ENCODE measurements at regions of chr4 and their contacts with region 1.

Region 1: GRCh38 chr4:102620697-102621497 is 119.7 kb downstream of the NFKB1 start:
- DNase-seq: no peak
- ATAC-seq: peak; percentile 74 to 94 (median 90)
- H3K4me3 ChIP-seq: peak overlapping the region in 4 of 10 donors; percentile 23 to 38 (median 27)
- H3K27ac ChIP-seq: peak overlapping the region in 3 of 10 donors; percentile 9 to 60 (median 13)
- H3K4me1 ChIP-seq: peaks cover 0 to 20% (median 5%) of the 10 kb centered on the region in 9 donors
- H3K27me3 ChIP-seq: no peaks in the 10 kb centered on the region
- CTCF ChIP-seq: peak in 8 of 9 donors; percentile 29 to 71 (median 56)

Region 2: DNA sequence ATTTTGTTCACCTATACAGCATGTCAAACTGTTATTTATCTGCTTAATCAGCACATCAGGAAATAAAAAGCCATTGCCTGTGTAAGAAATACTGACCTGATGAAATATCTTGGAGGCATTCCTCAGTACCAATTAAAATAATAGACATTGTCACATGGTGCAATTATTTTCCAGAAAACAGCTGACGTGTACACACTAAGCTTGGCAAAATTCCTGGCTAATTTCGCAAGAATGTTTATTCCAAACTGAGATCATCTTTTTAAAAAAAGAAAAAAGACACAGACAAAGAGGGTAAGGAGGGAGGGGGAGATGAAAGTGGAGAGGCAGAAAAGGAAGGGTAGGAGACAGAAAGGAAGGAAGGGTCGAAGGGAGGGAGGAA is 181.7 kb before region 1 on chr4:
- intact Hi-C with region 1: loop called in 4 of 10 experiments (anchors 5 to 10 kb)
- DNase-seq: peak in 1 of 2 donors; percentile 46
- ATAC-seq: peak in 7 of 8 donors; percentile 75 to 88 (median 82)
- H3K4me3 ChIP-seq: no peak overlapping the region
- H3K27ac ChIP-seq: peak overlapping the region in 7 of 10 donors; percentile 16 to 73 (median 56)
- H3K4me1 ChIP-seq: peaks cover 0 to 19% (median 18%) of the 10 kb centered on the region in 9 donors
- H3K27me3 ChIP-seq: no peaks in the 10 kb centered on the region
- CTCF ChIP-seq: no peak

Region 3: DNA sequence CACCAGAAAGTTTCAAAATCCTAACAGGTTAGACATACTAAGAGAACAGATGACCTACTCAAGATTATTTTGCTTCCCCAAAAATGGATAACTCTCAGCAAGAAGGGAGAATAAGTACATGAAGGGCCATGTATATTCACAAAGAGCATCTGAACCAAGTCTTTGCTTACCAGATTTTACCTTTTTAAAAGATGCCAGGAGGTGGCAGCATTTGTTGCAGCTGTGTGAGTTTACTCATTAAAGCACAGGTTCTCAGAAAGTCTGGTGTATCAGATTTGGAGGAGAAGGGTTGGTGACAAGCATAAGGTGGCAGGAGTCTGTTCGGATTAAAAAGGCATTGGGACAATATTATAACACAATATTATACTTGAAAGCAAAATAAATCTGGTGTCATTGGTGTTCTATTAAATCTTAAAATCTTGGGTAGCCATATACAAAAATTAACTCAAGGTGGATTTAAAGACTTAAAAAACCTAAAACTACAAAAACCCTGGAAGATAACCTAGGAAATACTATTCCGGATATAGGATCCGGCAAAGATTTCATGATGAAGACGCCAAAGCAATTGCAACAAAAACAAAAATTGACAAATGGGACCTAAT is 171.0 kb before region 1 on chr4:
- intact Hi-C with region 1: loop called in 8 of 10 experiments (anchors 1 to 10 kb)
- DNase-seq: peak in 1 of 2 donors; percentile 48
- ATAC-seq: peak in 4 of 8 donors; percentile 55 to 79 (median 65)
- H3K4me3 ChIP-seq: no peak overlapping the region
- H3K27ac ChIP-seq: no peak overlapping the region
- H3K4me1 ChIP-seq: no peaks in the 10 kb centered on the region
- H3K27me3 ChIP-seq: no peaks in the 10 kb centered on the region
- CTCF ChIP-seq: peak; percentile 30 to 79 (median 70)

Region 4: DNA sequence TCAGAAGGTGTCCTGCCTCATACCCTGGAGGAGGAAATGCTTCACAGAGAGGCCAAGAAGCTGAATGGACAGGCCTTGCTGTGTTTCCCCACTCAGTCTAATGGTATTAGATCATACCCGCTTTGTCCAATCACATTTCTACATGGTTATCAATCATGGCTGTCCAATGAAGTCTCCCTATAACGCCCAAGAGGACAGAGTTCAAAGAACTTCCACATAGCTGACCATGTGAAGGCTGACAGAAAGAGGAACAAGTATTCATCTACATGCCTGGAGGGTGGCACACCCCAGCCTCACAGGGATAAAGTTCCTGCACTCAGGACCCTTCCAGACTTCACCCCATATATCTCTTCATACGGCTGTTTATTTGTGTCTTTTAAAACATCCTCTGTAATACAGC is 16.5 kb after region 1 on chr4:
- intact Hi-C with region 1: no loop called
- DNase-seq: no peak
- ATAC-seq: no peak
- H3K4me3 ChIP-seq: no peak overlapping the region
- H3K27ac ChIP-seq: no peak overlapping the region
- H3K4me1 ChIP-seq: peaks cover 0 to 7% (median 0%) of the 10 kb centered on the region in 9 donors
- H3K27me3 ChIP-seq: no peaks in the 10 kb centered on the region
- CTCF ChIP-seq: no peak

Region 5: GRCh38 chr4:102826890-102827673 is 206.2 kb after region 1 on chr4 and contains the start of gene UBE2D3:
- intact Hi-C with region 1: loop called in 1 of 10 experiments (anchors 5 kb)
- DNase-seq: peak; percentile 94 to 95
- ATAC-seq: peak; percentile 72 to 87 (median 75)
- H3K4me3 ChIP-seq: peak within 1 kb of the TSS; percentile 71 to 94 (median 88)
- H3K27ac ChIP-seq: peak within 1 kb of the TSS; percentile 97 to 100 (median 100)
- H3K4me1 ChIP-seq: peaks cover 2 to 54% (median 40%) of the 10 kb centered on the region in 9 donors
- H3K27me3 ChIP-seq: no peaks in the 10 kb centered on the region
- CTCF ChIP-seq: peak in 3 of 9 donors; percentile 17 to 38 (median 33)
- total RNA-seq, gene UBE2D3: 210 to 297 (median 250) TPM

Region 6: GRCh38 chr4:102868781-102869568 is 248.1 kb after region 1 on chr4 and contains the start of gene CISD2:
- intact Hi-C with region 1: loop called in 1 of 10 experiments (anchors 5 kb)
- DNase-seq: peak; percentile 91 to 93
- ATAC-seq: peak; percentile 97 to 100 (median 97)
- H3K4me3 ChIP-seq: peak within 1 kb of the TSS; percentile 49 to 82 (median 71)
- H3K27ac ChIP-seq: peak within 1 kb of the TSS; percentile 82 to 97 (median 92)
- H3K4me1 ChIP-seq: peaks cover 0 to 49% (median 19%) of the 10 kb centered on the region in 9 donors
- H3K27me3 ChIP-seq: no peaks in the 10 kb centered on the region
- CTCF ChIP-seq: peak in 1 of 9 donors; percentile 8
- total RNA-seq, gene CISD2: 12.1 to 22.1 (median 16.9) TPM

Region 7: DNA sequence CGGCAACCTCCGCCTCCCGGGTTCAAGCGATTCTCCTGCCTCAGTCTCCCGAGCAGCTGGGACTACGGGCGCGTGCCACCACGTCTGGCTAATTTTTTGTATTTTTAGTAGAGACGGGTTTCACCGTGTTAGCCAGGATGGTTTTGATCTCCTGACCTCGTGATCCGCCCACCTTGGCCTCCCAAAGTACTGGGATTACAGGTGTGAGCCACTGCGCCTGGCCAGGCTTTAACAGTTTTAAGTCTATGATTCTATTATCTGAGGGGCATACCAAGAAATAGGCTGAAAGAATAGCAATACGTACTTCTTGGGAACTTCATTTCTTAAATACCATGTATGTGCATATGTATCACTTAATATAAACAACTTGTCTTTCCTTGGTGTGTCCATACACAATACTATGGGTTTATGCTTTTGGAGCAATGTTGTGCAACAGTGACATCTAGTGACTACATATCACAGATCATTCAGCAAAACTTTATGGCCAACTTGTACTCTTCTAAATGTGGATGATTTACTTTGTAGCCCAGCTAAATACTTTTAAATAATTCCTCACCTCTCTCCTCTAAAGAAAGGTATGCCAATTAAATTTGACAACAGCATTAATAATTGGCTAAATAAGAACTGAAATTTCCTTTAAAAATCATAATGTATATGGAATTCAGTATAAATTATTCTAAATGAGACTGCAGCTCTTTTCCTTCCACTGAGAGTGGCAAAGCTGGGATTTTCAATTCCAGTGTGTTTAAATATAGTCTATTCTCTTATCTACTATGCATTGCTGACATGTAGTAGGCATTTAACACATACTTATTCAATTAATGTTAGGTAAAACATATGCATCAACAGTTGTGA is 388.2 kb after region 1 on chr4:
- intact Hi-C with region 1: loop called (anchors 1 to 5 kb)
- DNase-seq: peak in 1 of 2 donors; percentile 23
- ATAC-seq: peak; percentile 47 to 89 (median 78)
- H3K4me3 ChIP-seq: no peak overlapping the region
- H3K27ac ChIP-seq: no peak overlapping the region
- H3K4me1 ChIP-seq: peaks cover 0 to 15% (median 11%) of the 10 kb centered on the region in 9 donors
- H3K27me3 ChIP-seq: no peaks in the 10 kb centered on the region
- CTCF ChIP-seq: peak; percentile 60 to 94 (median 81)

Region 8: GRCh38 chr4:103091601-103092223 is 470.8 kb after region 1 on chr4:
- intact Hi-C with region 1: loop called in 6 of 10 experiments (anchors 5 to 10 kb)
- DNase-seq: no peak
- ATAC-seq: peak in 3 of 8 donors; percentile 19 to 48 (median 45)
- H3K4me3 ChIP-seq: no peak overlapping the region
- H3K27ac ChIP-seq: no peak overlapping the region
- H3K4me1 ChIP-seq: peaks cover 0 to 14% (median 0%) of the 10 kb centered on the region in 9 donors
- H3K27me3 ChIP-seq: no peaks in the 10 kb centered on the region
- CTCF ChIP-seq: peak in 7 of 9 donors; percentile 27 to 58 (median 54)

Measured in heart right ventricle (tissue), 16 donors.